Activated B cell treated with CpG ODN at 0.5 μM for 24 hours (primary cell): ENCODE measurements at regions of chr10 and their contacts with region 1.

Region 1: DNA sequence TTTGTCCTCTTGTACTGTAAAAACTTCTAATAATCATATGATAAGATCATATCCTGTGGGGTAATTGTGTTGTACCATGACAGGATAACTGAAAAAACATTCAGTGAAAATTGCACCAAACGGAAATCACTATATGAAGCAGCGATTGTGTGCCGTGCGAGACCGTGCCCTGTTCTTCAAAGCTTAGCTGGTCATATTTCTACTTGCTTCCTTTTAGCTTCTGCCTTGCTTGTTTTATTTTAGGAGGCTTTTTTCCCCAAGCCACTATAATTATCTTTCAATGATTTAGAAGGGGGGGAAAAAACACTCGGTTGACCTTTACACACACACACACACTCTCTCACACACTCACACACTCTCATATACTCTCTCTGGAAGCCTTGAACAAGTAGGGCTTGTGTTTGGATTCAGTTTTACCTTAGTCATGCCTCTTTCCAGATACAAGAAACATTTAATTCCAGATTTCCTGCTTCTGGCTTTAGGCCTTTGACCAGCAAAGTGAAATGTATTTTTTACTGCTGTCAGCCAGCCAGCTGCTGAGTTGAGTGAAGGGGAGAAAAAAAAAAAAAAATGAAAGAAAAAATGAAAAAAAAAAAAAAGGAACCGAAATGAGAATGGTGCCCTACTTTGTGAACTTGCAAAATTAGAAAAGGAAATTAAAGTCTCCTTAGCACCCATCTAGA is 181.4 kb downstream of the ARID5B start:
- DNase-seq: no peak
- ATAC-seq: peak; percentile 48
- H3K4me3 Mint-ChIP-seq: peak overlapping the region; percentile 65
- H3K27ac Mint-ChIP-seq: peak overlapping the region; percentile 96
- H3K4me1 Mint-ChIP-seq: peaks cover 86% of the 10 kb centered on the region
- H3K27me3 Mint-ChIP-seq: no peaks in the 10 kb centered on the region
- CTCF ChIP-seq: no peak

Region 2: GRCh38 chr10:61750929-61751471 is 331.9 kb before region 1 on chr10:
- CTCF ChIA-PET with region 1: interaction called, 4 read pairs
- POLR2A ChIA-PET with region 1: interaction called, 8 read pairs
- intact Hi-C with region 1: loop called (anchors 10 kb)
- DNase-seq: peak; percentile 47
- ATAC-seq: peak; percentile 97
- H3K4me3 Mint-ChIP-seq: peak overlapping the region; percentile 44
- H3K27ac Mint-ChIP-seq: no peak overlapping the region
- H3K4me1 Mint-ChIP-seq: peaks cover 38% of the 10 kb centered on the region
- H3K27me3 Mint-ChIP-seq: no peaks in the 10 kb centered on the region
- CTCF ChIP-seq: no peak

Region 3: DNA sequence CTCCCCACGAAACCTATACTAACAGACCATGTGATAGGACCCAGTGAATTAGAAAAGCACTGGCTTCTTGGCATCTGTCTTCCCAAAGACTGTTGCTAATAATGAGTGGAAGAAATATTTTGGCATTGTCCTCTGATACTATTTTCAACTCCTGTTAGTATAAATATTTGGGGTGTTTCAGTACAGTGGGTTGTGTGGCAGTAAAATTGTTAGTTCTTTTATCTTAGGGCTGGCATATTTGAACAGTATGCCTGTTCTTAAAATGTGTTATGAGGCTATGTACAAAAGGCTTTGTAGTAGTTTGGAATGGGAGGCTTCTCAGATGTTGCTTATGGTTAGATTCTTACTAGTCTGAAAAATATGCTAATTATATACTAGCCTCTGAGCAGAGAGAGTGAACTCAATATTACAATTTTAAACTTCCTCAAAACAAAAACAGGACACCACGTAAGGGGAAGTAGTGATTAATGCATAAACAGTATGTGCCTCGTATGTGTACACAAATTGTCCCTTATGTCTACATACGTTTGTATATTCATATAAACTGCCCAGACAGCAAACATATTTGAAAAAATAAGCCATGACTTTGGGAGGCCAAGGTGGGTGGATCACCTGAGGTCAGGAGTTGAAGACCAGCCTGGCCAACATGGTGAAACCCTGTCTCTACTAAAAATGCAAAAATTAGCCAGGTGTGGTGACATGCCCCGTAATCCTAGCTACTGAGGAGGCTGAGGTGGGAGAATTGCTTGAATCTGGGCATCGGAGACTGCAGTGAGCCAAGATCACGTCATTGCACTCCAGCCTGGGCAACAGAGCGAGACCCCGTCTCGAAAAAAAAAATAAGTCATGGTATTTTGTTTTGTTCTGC is 66.0 kb before region 1 on chr10:
- CTCF ChIA-PET with region 1: no interaction called
- POLR2A ChIA-PET with region 1: interaction called, 8 read pairs
- intact Hi-C with region 1: loop called (anchors 2 kb)
- DNase-seq: peak; percentile 40
- ATAC-seq: peak; percentile 65
- H3K4me3 Mint-ChIP-seq: peak overlapping the region; percentile 66
- H3K27ac Mint-ChIP-seq: peak overlapping the region; percentile 96
- H3K4me1 Mint-ChIP-seq: peaks cover 84% of the 10 kb centered on the region
- H3K27me3 Mint-ChIP-seq: no peaks in the 10 kb centered on the region
- CTCF ChIP-seq: no peak

Region 4: GRCh38 chr10:62063795-62064472 is 18.9 kb before region 1 on chr10:
- CTCF ChIA-PET with region 1: interaction called, 5 read pairs
- POLR2A ChIA-PET with region 1: interaction called, 14 read pairs
- intact Hi-C with region 1: loop called (anchors 1 kb)
- DNase-seq: no peak
- ATAC-seq: no peak
- H3K4me3 Mint-ChIP-seq: no peak overlapping the region
- H3K27ac Mint-ChIP-seq: peak overlapping the region; percentile 35
- H3K4me1 Mint-ChIP-seq: peaks cover 58% of the 10 kb centered on the region
- H3K27me3 Mint-ChIP-seq: no peaks in the 10 kb centered on the region
- CTCF ChIP-seq: no peak

Region 5: GRCh38 chr10:62109587-62110293 is 26.9 kb after region 1 on chr10:
- CTCF ChIA-PET with region 1: no interaction called
- POLR2A ChIA-PET with region 1: interaction called, 30 read pairs
- intact Hi-C with region 1: loop called (anchors 1 kb)
- DNase-seq: no peak
- ATAC-seq: peak; percentile 72
- H3K4me3 Mint-ChIP-seq: peak overlapping the region; percentile 58
- H3K27ac Mint-ChIP-seq: peak overlapping the region; percentile 87
- H3K4me1 Mint-ChIP-seq: peaks cover 70% of the 10 kb centered on the region
- H3K27me3 Mint-ChIP-seq: no peaks in the 10 kb centered on the region
- CTCF ChIP-seq: no peak

Region 6: GRCh38 chr10:63297941-63298340 is 1215.1 kb after region 1 on chr10:
- CTCF ChIA-PET with region 1: no interaction called
- POLR2A ChIA-PET with region 1: no interaction called
- intact Hi-C with region 1: no loop called
- DNase-seq: no peak
- ATAC-seq: no peak
- H3K4me3 Mint-ChIP-seq: no peak overlapping the region
- H3K27ac Mint-ChIP-seq: no peak overlapping the region
- H3K4me1 Mint-ChIP-seq: peaks cover 8% of the 10 kb centered on the region
- H3K27me3 Mint-ChIP-seq: no peaks in the 10 kb centered on the region
- CTCF ChIP-seq: no peak